Posterior cingulate gyrus (tissue), 11 donors: ENCODE measurements at regions of chr11 and their contacts with region 1.

Region 1: DNA sequence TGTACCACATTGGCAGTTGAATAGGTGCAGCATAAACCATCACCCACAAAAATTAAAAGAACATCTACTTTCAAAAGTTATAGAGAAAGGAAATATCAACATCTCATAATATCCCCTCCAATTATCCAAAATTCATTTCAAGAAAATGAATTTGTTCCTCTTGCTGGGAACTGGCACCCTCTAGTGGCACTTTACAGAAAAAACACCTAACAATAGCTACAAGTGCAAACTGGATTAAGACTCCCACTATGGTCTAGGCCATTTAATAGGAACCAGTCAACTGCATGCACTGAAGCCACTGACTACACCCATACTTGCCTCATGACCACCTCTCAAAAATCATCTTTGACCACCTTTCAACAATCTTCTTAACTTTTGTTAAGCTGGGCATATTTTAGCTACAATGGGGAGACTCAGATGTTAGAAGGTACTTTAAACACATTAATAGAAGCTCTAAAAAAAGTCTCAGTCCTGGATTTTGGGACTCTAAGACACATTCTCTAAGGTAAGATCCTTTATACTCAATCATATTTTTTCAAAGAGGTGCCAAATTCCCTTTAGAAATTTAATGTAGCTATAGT is 17.3 kb downstream of the TRAF6 start:
- DNase-seq: peak in 1 of 10 donors; percentile 8

Region 2: DNA sequence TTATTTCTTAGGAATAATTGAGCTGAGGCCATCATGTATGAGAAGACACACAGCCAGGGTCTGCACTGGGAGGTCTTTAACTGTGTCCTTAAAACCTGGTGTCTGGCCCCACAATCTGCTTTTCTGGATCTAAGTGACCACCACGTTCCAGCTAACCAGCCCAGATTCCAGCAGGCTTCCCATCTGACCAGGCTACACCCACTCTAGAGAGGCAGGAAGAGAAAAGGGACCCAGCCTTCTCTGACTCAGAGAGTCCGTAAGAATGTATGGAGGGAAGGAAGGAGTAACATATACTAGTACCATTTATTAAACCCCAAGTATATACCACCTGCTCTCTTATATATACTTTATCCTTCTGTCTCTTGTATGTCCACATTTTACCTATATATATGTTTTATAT is 468.9 kb before region 1 on chr11:
- intact Hi-C with region 1: no loop called
- DNase-seq: no peak

Region 3: DNA sequence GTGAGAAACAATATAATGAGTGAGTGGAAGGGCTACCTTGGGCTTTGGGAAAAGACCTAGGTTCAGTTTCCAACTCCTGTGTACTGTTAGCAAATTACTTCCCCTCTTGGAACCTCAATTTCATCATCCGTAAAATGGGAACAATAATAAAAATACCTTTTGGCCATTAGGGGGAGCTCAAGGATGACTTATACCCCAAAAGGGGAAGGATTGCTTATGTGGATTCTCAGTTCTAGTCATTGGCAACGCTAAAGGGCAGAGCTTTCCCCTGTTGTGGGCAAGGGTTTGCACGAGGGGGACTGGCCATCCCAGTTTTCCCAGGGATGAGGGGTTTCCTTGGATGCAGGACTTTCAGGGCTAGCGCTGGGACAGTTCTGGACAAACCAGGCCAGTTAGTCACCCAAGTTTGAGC is 200.5 kb before region 1 on chr11:
- intact Hi-C with region 1: loop called (anchors 5 kb)
- DNase-seq: no peak

Region 4: DNA sequence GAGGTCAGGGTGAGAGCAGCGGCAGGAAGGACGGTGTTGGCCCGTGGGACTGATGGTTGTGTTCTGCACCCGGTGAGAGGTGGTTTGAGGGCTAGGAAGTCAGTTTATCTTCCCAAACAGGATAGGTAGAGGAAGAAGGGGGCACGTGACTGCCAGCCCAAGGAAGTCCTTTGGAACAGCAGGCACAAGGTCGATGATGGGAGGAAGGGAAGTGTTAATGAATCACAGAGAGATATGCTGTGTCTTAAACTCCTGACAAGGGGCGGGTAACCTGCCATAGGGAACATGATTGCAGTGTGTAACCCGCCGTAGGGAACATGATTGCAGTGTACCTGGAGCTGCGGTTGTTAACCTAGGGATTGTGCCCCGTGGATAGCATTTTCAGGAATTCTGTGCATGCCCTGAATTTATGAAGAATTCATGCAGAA is 147.7 kb before region 1 on chr11:
- intact Hi-C with region 1: no loop called
- DNase-seq: no peak

Region 5: GRCh38 chr11:36425561-36426081 is 67.2 kb before region 1 on chr11:
- intact Hi-C with region 1: no loop called
- DNase-seq: no peak

Region 6: DNA sequence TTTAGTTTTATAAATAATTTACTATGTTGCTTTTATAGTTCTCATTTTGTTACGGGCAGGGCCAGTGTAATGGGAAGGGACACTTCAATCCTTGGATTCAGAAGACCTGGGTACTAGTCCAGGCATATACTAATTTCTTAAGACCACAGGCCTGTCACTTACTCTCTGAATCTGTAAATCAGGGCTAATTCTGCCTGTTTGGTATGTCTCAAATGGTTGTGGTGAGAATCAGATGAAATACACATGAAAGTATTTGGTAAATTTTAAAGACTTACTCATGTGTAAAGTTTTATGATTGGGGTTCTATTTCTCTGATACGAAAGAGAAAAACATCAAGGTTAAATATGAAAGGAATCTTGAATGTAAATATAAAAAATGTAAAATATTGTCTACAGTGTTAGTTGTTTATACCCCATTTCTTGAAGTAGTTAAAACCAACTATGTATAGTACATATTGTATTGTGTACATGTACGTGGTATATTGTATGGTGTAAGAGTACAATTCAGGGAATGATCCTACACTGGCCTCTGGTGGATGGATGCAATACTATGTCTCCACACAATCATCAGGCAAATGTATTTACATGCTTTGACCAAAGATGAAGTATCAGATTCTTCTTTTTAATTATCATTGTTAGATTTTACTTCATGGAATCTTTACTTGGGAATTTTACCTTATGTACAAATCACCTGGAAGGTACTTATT is 129.8 kb after region 1 on chr11:
- intact Hi-C with region 1: no loop called
- DNase-seq: no peak